Aorta (tissue), 5 donors: ENCODE measurements at regions of chr11 and their contacts with region 1.

Region 1: DNA sequence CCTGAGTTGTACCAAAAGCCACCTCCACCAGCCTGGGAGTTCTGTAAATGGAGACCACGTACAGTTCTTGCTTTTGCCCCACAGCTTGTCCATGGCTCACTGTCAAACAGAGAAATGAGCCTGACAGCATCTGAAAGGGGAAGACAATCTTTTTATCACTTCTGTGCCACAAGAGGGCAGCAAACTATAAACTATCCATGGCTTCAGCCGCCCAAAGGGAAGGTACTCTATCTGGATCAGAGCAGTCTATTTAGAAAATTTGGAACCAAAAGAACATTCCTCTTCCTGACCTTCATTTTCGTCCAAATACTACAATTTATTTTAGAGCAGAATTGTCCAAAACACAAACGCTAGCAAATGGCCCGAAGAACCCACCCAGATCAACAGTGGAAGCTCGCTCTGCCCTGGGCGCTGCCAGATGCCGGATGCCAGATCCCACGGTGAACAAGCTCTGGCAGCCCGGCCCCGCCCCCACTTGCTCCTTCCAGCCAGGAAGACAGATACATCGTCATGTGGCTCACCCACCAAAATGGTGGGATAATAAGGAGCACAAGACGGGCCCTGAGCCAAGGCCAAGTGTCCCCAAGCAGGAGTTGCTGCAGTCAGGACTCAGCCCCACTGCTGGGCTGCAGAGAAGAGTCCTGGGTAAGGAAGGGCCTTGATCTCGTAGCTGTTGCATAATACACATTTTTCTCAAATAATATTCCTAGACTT is 23.9 kb upstream of the SCGB1A1 start:
- DNase-seq: peak; percentile 91 to 93
- ATAC-seq: peak; percentile 86
- H3K4me3 ChIP-seq: no peak overlapping the region
- H3K27ac ChIP-seq: peak overlapping the region in 1 of 2 donors; percentile 60
- H3K4me1 ChIP-seq: peaks cover 0 to 5% of the 10 kb centered on the region in 2 donors
- H3K27me3 ChIP-seq: no peaks in the 10 kb centered on the region

Region 2: DNA sequence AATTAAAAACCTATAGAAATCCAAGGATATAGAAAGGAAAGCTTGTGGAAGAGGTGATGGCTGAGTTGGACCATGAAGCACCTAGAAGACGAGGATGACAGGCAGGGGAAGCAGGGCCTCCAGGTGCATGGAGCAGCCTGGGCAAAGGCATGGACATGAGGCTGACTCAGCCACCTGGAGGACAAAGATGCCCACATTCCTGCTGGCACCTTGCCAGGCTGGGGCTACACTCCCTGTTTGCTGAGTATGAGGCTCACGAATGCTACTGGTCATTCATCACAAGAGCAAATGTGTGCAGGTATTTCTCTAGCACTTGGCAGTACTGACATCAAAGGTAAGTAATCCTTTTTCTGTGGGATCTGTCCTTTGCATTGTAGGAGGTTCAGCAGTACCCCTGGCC is 193.6 kb before region 1 on chr11:
- intact Hi-C with region 1: no loop called
- DNase-seq: no peak
- ATAC-seq: no peak
- H3K4me3 ChIP-seq: no peak overlapping the region
- H3K27ac ChIP-seq: no peak overlapping the region
- H3K4me1 ChIP-seq: no peaks in the 10 kb centered on the region
- H3K27me3 ChIP-seq: no peaks in the 10 kb centered on the region

Region 3: GRCh38 chr11:62315431-62315830 is 79.6 kb before region 1 on chr11:
- intact Hi-C with region 1: no loop called
- DNase-seq: no peak
- ATAC-seq: no peak
- H3K4me3 ChIP-seq: no peak overlapping the region
- H3K27ac ChIP-seq: no peak overlapping the region
- H3K4me1 ChIP-seq: no peaks in the 10 kb centered on the region
- H3K27me3 ChIP-seq: no peaks in the 10 kb centered on the region

Region 4: DNA sequence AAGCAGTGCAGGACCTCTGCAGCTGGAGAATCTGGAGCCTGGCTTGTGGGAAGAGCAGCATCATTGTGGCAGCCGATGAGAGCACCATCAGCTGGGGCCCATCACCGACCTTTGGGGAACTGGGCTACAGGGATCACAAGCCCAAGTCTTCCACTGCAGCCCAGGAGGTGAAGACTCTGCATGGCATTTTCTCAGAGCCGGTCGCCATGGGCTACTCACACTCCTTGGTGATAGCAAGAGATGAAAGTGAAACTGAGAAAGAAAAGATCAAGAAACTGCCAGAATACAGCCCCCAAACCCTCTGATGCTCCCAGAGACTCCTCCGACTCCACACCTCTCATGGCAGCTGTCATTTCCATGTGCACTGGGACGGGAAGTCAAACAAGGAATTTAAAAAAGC is 22.1 kb before region 1 on chr11:
- intact Hi-C with region 1: no loop called
- DNase-seq: no peak
- ATAC-seq: no peak
- H3K4me3 ChIP-seq: no peak overlapping the region
- H3K27ac ChIP-seq: no peak overlapping the region
- H3K4me1 ChIP-seq: no peaks in the 10 kb centered on the region
- H3K27me3 ChIP-seq: no peaks in the 10 kb centered on the region

Region 5: GRCh38 chr11:62472012-62472884 is 77.3 kb after region 1 on chr11:
- intact Hi-C with region 1: no loop called
- DNase-seq: no peak
- ATAC-seq: peak; percentile 44
- H3K4me3 ChIP-seq: no peak overlapping the region
- H3K27ac ChIP-seq: no peak overlapping the region
- H3K4me1 ChIP-seq: no peaks in the 10 kb centered on the region
- H3K27me3 ChIP-seq: no peaks in the 10 kb centered on the region

Region 6: GRCh38 chr11:62689421-62690183 is 294.6 kb after region 1 on chr11 and contains the start of gene LRRN4CL:
- intact Hi-C with region 1: loop called (anchors 5 kb)
- DNase-seq: peak; percentile 77 to 82
- ATAC-seq: peak; percentile 84
- H3K4me3 ChIP-seq: no peak within 1 kb of the TSS
- H3K27ac ChIP-seq: no peak within 1 kb of the TSS
- H3K4me1 ChIP-seq: no peaks in the 10 kb centered on the region
- H3K27me3 ChIP-seq: no peaks in the 10 kb centered on the region
- total RNA-seq, gene LRRN4CL: 8.5 to 24.5 TPM

Region 7: DNA sequence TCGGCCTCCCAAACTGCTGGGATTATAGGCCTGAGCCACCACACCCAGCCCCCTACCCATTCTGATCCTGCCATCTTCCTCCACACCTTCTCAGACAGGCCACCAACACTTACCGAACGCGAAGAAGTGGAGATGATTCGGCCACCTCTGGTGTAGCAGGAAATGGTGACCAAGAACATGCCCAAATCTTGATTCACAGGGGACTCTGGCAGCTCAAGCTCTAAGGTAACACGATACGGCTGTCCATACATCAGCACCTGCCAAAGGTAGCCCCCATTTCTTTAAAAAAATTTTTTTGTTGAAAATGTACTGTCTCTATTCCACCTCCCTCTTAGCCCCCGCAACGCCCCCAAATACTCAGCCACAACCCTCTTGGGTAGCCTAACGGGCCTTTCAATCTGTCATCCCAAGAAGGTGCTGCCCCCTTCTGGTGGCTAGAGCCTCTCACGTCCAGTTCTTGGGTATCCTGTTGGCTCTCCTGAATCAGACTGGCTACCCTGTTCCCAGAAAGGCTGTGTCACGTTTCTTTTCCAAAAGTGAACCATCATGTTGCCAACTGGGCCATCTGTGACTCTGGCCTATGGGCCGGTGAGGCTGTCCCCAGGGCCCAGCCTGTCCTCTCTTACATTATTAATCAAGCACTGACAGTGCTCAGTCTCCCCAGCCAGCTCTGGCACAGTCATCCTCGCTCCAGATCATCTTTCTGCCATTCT is 299.6 kb after region 1 on chr11:
- intact Hi-C with region 1: loop called (anchors 5 kb)
- DNase-seq: peak; percentile 88 to 90
- ATAC-seq: peak; percentile 86
- H3K4me3 ChIP-seq: no peak overlapping the region
- H3K27ac ChIP-seq: no peak overlapping the region
- H3K4me1 ChIP-seq: no peaks in the 10 kb centered on the region
- H3K27me3 ChIP-seq: no peaks in the 10 kb centered on the region